ENCODE measurements at regions of chr6 and their contacts with region 1.

Region 1: DNA sequence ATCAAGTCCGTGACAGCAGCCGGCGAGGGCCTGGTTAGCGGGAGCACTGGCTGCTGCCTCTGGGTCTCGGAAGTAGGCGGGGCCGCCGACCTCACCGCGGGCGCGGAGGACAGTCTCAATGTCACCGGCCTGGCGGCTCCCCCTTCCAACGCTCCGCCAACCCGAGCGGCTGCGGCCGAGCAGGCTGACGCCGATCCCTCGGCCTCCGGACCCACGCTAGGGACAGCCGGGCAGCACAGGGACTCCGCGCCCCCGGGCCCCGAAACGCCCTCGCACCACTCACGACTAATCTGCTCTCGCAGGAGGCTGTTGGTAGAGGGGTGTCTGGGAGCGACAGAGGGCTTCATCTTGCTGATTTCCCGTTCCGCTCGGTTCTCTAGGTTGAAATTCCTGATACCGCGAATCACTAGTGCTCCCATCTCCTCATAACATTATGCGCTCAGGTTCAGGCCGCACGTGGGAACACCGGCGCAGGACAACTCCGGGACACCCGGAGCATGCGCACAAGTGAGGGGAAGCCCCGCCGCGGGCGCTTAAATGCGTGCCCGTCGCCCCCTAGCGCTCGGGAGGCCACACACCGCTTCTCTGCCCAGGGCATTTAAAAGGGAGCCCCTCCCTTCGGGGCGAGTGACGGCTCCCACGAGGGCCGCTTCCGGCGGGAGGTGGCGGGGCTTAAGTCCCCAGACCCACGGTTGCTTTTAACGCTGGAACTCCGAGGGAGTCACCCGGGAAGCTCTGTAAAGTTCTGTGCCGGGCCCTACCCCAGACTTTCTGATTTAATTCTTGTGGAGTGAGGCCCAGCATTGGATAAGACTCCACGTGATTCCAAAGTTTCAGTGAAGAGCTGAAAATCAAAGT is at the start of gene NDUFAF4:
- DNase-seq: peak; percentile 50
- H3K4me3 ChIP-seq: peak within 1 kb of the TSS; percentile 87
- CTCF ChIP-seq: peak; percentile 96

Region 2: DNA sequence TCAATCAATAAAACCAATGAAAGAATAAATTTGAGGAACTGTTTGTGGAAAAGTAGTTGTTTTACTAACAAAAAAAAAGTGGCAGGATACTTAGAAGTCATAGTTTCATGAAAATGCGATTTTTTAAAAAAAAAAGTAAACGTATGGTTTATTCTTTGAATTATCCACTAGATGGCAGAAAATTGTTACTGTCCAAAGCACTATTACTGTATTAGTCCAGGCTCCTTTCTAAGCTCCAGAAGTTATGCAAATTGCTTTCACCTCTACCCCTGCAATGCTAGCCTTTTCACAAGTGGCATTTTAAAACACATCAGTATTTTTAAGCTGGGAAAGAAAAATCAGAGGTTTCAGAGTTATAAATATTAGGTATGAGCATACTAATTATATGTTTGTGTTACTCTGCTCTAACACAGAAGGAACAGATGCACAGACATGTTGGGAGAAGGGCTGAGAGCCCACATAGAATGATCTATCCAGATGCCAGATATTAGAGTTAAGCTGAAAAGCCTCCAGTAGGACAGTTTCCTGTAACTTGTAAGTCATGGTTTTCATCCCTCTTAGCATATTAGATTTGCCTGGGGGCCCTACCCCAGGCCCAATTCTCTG is 270.8 kb before region 1 on chr6:
- CTCF ChIA-PET with region 1: interaction called, 21 read pairs
- POLR2A ChIA-PET with region 1: no interaction called
- DNase-seq: no peak
- H3K4me3 ChIP-seq: no peak overlapping the region
- CTCF ChIP-seq: no peak

Region 3: GRCh38 chr6:96755096-96755495 is 142.5 kb before region 1 on chr6:
- CTCF ChIA-PET with region 1: no interaction called
- POLR2A ChIA-PET with region 1: no interaction called
- DNase-seq: no peak
- H3K4me3 ChIP-seq: no peak overlapping the region
- CTCF ChIP-seq: no peak

Region 4: GRCh38 chr6:96766769-96767168 is 130.8 kb before region 1 on chr6:
- CTCF ChIA-PET with region 1: no interaction called
- POLR2A ChIA-PET with region 1: no interaction called
- DNase-seq: no peak
- H3K4me3 ChIP-seq: no peak overlapping the region
- CTCF ChIP-seq: no peak

Region 5: GRCh38 chr6:96872976-96873375 is 24.6 kb before region 1 on chr6:
- CTCF ChIA-PET with region 1: no interaction called
- POLR2A ChIA-PET with region 1: no interaction called
- DNase-seq: no peak
- H3K4me3 ChIP-seq: no peak overlapping the region
- CTCF ChIP-seq: no peak

Region 6: DNA sequence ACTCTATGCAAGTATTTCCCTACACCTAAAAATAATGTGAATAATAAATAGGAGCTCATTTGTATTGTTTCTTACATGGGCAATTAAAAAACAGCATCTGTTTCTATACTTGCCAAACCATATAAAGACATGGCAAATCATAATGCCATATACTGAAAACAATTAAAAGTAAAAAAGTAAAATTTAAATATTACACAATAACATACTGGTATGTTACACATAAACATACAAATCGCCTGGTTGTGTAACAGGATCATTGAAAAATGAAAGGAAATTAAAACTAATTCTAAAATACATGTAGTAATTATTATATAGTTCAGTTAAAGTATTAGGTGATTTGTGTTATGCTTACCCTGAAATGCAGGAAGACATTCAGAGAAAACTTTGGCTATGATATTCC is 11.1 kb before region 1 on chr6:
- CTCF ChIA-PET with region 1: interaction called, 39 read pairs
- POLR2A ChIA-PET with region 1: interaction called, 6 read pairs
- DNase-seq: no peak
- H3K4me3 ChIP-seq: no peak overlapping the region
- CTCF ChIP-seq: no peak

Region 7: GRCh38 chr6:96923400-96923799 is 25.8 kb after region 1 on chr6:
- CTCF ChIA-PET with region 1: interaction called, 24 read pairs
- POLR2A ChIA-PET with region 1: no interaction called
- DNase-seq: no peak
- H3K4me3 ChIP-seq: no peak overlapping the region
- CTCF ChIP-seq: no peak

Region 8: DNA sequence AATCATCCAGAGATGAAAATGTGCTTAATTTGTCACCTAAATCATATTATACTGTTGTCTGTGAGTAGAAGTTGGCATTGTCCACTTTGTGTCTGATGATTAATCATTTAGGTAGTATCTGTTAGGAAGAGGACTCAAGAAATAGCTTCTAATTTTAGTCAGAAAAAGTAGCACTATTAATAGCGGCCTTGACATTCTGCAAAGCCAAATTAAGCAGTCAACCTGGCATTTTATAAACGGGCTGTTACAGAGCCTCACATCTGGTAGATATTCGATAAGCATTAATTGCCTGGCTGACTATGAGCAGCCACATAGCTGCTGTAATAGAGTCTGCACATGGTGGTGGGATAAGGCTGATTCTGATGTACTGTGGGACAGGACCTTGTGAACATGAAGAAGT is 126.4 kb after region 1 on chr6:
- CTCF ChIA-PET with region 1: interaction called, 17 read pairs
- POLR2A ChIA-PET with region 1: no interaction called
- DNase-seq: no peak
- H3K4me3 ChIP-seq: no peak overlapping the region
- CTCF ChIP-seq: no peak

Region 9: DNA sequence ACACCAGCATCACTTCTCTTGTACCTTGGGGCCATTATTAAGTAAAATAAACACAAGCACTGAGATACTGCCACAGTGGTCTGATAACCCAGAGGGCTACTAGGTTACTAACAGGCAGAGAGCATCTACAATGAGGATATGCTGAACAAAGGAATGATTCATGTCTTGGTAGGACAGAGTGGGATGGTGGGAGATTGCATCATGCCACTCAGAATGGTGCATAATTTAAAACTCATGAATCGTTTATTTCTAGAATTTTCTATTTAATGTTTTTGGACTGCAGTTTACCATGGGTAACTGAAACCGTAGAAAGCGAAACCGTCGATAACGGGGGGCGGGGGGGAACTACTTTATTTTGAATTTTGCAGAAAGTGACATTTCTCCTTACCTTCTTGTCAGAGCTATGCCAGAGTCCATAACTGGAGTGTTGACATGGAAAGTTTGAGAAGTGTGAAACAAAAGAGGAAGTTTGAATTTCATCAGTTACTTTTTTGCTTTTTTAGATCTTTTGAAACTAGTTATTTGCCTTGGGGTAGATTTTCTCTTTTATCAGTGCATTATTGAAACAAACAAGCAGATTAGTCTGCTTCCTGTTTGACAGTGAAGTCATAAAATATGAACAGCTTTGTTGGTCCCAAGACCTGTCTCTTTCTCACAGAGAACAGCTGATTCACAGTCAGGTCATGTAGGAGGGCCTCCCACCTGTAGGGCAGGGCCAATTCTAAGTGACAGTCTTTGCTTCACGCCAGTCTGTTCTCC is 151.8 kb after region 1 on chr6:
- CTCF ChIA-PET with region 1: interaction called, 134 read pairs
- POLR2A ChIA-PET with region 1: no interaction called
- DNase-seq: no peak
- H3K4me3 ChIP-seq: no peak overlapping the region
- CTCF ChIP-seq: no peak

Region 10: DNA sequence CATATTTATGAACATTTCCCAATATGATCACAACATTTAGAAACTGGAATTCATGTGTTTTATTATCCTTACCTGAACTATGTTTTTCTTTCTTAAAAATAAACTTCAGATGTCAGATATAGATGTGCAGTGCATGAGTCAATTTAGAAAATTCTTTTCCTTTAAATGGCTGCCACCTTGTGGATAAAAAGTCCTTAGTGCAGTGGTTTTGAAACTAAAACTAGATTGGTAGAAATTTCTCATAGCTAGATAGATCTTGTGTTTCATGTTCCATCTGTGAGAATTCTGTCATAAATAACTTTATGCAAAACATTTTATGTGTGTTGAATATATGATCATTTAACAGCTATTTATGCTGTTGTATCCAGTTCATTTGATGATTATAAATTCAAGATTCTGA is 161.9 kb after region 1 on chr6:
- CTCF ChIA-PET with region 1: interaction called, 134 read pairs
- POLR2A ChIA-PET with region 1: no interaction called
- DNase-seq: no peak
- H3K4me3 ChIP-seq: no peak overlapping the region
- CTCF ChIP-seq: peak; percentile 17

Measured in AG04449 (cell line).